Ascending aorta (tissue), 2 donors: ENCODE measurements at regions of chr17 and their contacts with region 1.

Region 1: GRCh38 chr17:39365242-39365641 is 36.2 kb downstream of the FBXL20 start:
- DNase-seq: no peak
- H3K4me3 ChIP-seq: peak overlapping the region in 1 of 2 donors; percentile 42
- H3K27ac ChIP-seq: peak overlapping the region; percentile 69 to 77
- H3K4me1 ChIP-seq: peaks cover 7 to 12% of the 10 kb centered on the region in 2 donors
- H3K27me3 ChIP-seq: no peaks in the 10 kb centered on the region
- CTCF ChIP-seq: no peak

Region 2: DNA sequence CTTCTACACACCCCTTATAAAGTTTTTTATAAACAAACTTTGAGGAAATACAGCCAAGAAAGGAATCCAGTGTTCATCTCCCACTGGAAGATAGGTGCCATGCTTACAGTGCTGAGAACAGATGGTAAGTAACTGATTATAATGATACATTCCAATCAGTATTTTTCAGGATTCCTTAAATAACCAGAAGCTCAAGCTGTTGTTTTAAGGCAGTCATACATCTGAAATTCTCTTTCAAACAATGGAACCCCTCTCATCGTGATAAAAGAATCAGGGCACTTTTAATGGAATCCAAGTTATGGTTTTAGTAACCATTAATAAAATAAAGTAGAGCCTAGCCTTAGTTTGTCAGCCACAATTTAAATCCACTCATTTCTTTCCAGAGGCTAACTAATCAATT is 83.4 kb before region 1 on chr17:
- intact Hi-C with region 1: loop called (anchors 5 kb)
- DNase-seq: no peak
- H3K4me3 ChIP-seq: no peak overlapping the region
- H3K27ac ChIP-seq: peak overlapping the region in 1 of 2 donors; percentile 60
- H3K4me1 ChIP-seq: peaks cover 0 to 7% of the 10 kb centered on the region in 2 donors
- H3K27me3 ChIP-seq: no peaks in the 10 kb centered on the region
- CTCF ChIP-seq: no peak